ENCODE measurements at regions of chr9 and their contacts with region 1.

Region 1: GRCh38 chr9:120936011-120936763 is 9.6 kb upstream of the TRAF1 start:
- ATAC-seq: peak; percentile 76 to 97 (median 84)
- H3K4me3 ChIP-seq: no peak overlapping the region
- H3K27ac ChIP-seq: no peak overlapping the region
- H3K4me1 ChIP-seq: peaks cover 0 to 4% of the 10 kb centered on the region in 2 donors

Region 2: DNA sequence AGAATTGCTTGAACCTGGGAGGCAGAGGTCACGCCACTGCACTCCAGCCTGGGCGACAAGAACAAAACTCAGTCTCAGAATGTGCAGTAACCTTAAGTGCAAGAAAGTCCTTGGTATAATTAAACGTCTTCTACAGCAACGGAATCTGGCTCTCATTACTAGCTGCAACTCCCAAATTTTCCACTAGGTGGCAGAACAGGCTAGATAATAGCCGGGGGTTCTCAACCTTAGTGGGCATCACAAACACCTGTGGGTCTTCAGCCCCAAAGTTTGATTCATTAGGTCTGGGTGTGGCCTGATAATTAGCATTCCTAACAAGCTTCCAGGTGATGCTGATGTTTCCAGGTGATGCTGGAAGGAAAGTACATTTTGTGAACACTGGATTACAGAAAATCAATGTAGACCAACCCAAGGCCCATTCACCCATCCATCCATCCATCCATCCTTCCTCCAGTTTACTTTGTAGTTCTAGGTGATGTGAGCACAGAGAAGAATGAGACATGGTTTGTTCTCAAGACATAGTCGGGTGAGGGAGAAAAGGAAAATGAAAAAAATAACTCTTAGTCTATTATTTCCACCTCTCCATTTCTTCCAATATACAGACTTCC is 180.3 kb before region 1 on chr9:
- in situ Hi-C with region 1: loop called in 4 of 9 experiments (anchors 25 kb)
- ATAC-seq: peak in 6 of 8 experiments; percentile 43 to 74 (median 58)
- H3K4me3 ChIP-seq: no peak overlapping the region
- H3K27ac ChIP-seq: no peak overlapping the region
- H3K4me1 ChIP-seq: no peaks in the 10 kb centered on the region

Region 3: DNA sequence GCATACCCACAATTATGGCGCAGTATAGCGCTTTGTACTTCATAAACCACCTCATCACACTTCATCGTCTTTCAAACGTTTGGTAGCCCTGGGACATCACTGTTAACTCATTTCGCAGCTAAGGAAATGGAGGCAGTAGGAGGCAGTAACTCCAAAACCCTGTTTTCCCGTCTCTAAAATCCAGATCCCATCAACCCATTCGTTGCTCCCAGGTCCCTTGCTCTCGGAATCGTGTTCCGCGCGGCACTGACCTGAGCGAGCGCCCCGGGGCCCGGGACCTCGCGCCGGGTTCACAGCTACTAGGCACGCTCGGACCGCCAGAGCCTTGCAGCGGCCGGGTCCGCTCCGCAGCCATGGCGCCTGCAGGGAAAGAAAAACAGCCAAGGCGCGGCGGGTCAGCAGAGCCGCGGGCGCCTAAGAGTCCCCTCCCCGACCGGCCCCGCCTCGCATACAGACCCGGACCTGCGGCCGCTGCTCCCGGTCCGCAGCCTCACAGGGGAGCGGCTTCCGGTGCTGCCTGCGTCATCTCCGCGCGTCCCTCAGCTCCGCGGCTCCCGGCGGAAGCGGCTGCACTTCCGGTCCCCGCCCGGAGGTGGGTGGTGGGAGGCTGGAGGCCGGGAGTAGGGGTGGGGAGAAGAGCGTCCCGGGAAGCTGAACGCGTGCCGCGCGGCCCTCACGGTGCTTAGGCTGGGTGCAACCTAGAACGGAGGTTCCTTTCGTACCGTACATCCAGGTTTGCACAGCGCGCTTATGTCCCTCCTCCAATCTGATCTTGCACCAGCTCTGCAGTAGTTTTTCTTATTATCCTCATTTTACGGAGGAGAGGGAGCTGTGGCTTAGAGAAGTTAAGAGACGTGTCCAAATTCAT is 143.1 kb before region 1 on chr9 and contains the start of gene FBXW2:
- in situ Hi-C with region 1: loop called in 1 of 9 experiments (anchors 25 kb)
- ATAC-seq: peak; percentile 95 to 99 (median 98)
- H3K4me3 ChIP-seq: peak within 1 kb of the TSS; percentile 63 to 92 (median 77)
- H3K27ac ChIP-seq: peak within 1 kb of the TSS; percentile 76 to 91
- H3K4me1 ChIP-seq: peaks cover 12 to 13% of the 10 kb centered on the region in 2 donors
- total RNA-seq, gene FBXW2: 13.7 to 72.2 (median 25.4) TPM

Region 4: DNA sequence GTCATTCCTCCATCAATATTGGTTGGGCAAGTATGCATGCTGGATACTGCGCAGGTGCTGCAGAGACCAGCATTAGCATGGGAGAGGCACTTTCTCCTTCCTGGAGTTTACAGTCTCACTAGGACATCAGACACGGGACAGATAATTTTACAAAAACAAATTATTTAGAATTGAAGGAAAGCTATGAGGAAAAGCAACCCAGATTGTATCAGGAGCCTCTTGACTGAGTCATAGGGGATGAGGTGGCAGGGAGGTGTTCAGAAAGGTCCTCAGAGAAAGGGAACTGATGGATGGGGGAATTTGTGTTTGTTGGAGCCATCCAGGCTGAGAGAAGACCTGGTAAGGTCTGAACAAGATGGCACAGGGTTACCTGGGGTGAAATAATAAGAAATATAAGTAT is 290.0 kb after region 1 on chr9:
- in situ Hi-C with region 1: no loop called
- ATAC-seq: peak in 1 of 8 experiments; percentile 39
- H3K4me3 ChIP-seq: no peak overlapping the region
- H3K27ac ChIP-seq: no peak overlapping the region
- H3K4me1 ChIP-seq: peaks cover 12% of the 10 kb centered on the region in 2 donors

Measured in motor neuron (in vitro differentiated cells).